Cardiac septum (tissue), 1 donor: ENCODE measurements at regions of chr17 and their contacts with region 1.

Region 1: DNA sequence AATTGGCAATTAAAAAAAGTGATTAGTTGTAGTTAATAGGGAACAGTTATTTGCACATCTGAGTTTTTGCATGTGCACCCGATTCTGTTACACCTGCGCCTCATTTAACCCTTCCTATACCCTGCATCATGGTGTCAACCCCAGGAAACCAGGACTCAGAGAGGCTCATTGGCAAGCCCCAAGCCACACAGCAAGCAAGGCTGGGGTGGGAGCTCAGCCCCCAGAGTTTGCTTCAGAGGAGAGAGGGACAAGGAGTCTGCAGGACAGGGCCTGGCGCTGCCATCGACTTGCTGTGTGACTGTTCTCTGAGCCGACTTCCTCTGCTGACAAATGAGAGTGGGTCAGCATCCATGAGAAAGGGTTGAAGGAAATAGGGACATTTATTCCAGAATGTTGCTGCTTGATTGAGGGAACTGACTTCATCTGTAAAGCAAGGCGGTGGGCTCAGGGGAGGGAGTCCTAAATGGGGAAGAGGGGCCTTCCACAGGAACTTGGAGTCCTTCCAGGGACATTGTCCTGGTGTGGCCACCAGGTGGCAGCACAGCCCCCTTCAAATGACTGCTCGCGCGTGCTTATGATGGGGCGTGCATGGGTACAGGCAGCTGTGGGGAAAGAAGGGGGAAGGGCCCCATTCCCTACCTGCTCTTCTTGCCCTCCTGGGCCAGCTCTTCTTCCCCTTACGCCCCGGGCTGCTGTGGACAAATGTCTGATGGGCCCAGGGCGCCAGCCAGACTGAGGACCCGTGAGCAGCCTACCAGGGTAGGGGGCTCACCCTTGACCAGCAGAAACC is 51.6 kb downstream of the NT5M start:
- DNase-seq: peak; percentile 85

Region 2: DNA sequence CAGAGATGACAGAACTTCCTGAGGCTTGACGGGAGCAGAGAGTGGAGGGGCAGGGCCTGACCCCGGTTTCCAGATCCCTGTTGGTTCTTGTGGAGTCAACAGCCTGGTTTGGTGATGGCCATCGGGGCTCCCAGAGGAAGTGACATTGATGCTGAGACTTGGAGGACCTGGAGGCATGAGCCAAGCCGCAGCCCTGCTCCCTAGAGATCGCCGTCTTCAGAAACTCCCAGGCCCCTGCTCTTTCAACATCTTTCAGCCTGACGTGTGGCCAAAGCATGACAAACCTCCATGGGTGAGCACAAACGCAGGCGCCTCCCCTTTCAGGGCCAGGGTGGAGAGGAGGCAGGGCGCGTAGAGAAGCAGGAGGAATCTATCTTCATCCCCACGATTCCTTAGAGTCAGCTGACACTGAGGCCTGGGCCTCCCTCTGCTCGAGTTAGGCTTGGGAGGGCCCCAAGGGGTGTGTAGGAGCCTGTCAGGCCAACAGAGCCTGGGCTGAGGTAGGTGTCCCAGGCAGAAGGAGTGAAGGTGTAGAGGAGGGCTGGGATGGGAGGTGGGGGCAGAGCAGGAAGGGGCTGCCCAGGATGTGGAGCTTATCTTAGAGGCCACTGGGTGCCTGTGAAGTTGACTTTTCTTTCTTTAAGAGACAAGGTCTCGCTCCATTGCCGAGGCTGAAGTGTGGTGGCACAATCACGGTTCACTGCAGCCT is 66.0 kb after region 1 on chr17:
- intact Hi-C with region 1: no loop called
- DNase-seq: peak; percentile 82

Region 3: DNA sequence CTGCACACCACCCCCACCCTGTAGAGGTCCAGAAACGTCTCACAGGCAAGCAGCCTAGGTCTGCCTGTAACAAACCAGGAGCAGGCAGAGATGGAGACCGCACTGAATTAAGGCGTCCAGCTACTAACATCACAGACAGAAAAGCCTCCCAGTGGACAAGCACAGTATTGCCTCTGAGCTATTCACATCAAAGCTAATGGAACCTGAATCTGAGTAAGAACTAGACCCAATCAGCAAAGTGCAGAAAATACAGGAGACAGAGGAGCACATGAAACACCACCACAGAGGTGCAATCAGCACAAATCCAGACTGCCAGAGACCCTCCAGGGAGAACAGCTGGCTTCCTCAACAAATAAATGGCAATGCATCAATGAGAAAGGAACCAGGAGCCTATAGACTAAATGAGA is 259.0 kb after region 1 on chr17:
- intact Hi-C with region 1: loop called (anchors 2 kb)
- DNase-seq: no peak

Region 4: GRCh38 chr17:17641621-17642409 is 287.1 kb after region 1 on chr17:
- intact Hi-C with region 1: loop called (anchors 2 kb)
- DNase-seq: peak; percentile 90